ENCODE measurements at regions of chr2 and their contacts with region 1.

Region 1: DNA sequence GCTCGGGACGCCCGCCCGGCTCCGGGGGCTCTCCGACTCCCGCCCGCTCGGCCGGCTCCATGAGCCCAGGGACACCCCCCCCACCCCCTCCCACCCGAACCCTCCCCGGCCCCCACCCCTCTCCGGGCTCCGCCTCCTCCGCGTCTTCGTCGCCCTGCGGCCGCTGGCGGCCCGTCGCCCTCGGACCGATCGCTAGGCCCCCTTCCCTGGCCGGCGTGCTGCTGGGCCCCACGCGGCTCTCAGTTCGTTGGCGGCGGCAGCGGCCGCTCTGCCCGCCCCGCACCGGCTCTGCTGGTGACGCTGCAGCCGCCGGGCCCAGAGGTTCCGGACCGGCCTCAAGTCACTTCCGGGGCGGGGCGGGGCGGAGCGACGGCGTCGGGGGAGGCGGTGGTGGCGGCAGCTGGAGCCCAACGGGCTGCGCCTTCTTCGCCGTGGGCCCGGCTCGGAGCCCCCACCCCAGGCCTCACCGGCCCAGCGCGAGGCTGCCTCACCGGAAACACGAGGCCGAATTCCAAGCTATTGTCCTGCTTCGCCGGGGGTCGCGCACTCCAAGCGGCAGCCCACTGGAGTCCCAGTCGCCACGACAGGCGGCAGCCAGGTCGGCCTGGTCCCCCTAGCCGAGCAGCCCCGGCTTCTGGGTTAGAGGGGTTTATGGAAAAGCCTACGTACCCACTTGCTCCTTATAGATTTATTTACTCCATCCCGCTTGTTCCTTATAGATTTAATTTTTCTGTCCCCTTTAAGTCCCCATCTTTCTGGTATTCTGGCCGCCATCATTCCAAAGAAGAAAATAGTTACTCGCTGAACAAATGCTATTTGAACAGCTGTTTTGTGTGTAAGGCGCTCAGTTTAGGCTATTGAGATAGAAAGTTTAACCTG is at the start of gene PSME4:
- DNase-seq: peak; percentile 90 to 92
- ATAC-seq: peak; percentile 93 to 94
- H3K4me3 ChIP-seq: peak within 1 kb of the TSS; percentile 90
- H3K27ac ChIP-seq: peak within 1 kb of the TSS; percentile 90 to 92
- H3K4me1 ChIP-seq: peaks cover 21% of the 10 kb centered on the region
- CTCF ChIP-seq: no peak
- EP300 ChIP-seq: no peak
- POLR2A ChIP-seq: peak; percentile 89
- RAD21 ChIP-seq: no peak
- polyA plus RNA-seq, gene PSME4: 55.8 and 63.6 TPM in 2 replicates

Region 2: DNA sequence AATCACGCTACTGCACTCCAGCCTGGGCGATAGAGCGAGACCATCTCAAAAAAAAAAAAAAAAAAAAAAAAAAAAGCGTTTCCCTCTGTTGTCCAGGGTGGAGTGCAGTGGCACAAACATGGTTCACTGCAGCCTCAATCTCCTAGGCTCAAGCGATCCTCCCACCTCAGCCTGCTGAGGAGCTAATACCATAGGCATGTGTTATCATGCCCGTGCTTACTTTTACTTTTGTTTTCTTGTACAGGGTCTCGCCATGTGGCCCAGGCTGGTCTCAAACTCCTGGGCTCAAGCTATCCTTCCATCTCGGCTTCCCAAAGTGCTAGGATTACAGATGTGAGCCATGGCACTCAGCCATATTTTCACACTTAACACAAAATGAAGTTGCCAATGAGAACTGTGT is 37.6 kb before region 1 on chr2:
- CTCF ChIA-PET with region 1: no interaction called
- POLR2A ChIA-PET with region 1: no interaction called
- DNase-seq: no peak
- ATAC-seq: no peak
- H3K4me3 ChIP-seq: no peak overlapping the region
- H3K27ac ChIP-seq: no peak overlapping the region
- H3K4me1 ChIP-seq: no peaks in the 10 kb centered on the region
- CTCF ChIP-seq: no peak
- EP300 ChIP-seq: no peak
- POLR2A ChIP-seq: no peak
- RAD21 ChIP-seq: no peak

Region 3: DNA sequence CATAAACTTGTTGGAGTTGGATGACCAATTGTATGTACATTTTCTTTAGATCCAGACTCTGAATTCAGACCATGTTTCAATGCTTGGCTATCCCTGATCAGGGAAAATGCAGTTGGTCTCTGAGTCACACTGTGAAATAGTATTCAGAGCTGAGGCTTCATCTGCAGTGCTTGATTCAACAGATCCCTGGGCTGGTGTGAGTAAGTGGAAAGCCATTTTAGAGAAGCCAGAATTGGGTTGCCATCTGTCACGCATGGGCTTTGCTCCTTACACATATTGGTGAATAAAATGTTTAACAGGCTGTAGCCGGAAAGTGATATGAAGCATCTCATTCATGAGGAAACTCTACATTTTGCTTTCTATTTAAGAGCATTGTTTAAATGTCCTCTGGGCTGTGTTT is 94.4 kb after region 1 on chr2:
- CTCF ChIA-PET with region 1: no interaction called
- POLR2A ChIA-PET with region 1: no interaction called
- DNase-seq: no peak
- ATAC-seq: no peak
- H3K4me3 ChIP-seq: no peak overlapping the region
- H3K27ac ChIP-seq: no peak overlapping the region
- H3K4me1 ChIP-seq: no peaks in the 10 kb centered on the region; the same call in 2 of the 3 replicates
- CTCF ChIP-seq: no peak
- EP300 ChIP-seq: no peak
- POLR2A ChIP-seq: no peak
- RAD21 ChIP-seq: no peak

Region 4: DNA sequence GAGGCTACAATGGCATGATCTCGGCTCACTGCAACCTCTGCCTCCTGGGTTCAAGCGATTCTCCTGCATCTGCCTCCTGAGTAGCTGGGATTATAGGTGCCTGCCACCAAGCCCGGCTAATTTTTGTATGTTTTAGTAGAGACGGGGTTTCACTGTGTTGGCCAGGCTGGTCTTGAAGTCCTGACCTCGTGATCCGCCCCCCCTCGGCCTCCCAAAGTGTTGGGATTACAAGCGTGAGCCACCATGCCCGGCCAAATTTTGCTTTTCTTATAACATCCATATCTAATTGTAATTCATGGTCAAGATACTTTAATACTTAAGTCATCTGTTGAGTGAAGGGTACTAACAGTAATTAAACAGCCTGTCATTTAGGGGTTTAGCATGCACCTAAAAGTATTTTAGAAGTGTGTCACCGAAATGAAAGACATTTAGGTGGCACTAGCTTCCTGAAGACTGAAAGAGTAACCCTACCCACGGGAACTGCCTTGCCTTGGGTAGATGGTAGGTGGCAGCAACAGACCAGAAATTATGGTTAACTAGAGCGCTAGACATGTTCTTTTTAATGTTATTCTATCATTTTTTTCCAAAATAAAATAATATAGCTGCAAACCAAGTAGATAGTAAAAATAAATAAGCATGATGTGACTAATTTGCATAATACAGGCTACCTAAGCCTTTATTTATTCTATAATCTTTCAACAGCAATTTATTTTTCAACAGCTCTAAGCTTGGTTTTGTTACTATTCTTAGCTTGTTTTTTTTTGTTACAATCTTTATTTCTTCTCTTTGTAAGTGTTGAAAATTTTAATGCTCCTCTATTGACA is 135.9 kb after region 1 on chr2:
- CTCF ChIA-PET with region 1: interaction called, 4 read pairs
- POLR2A ChIA-PET with region 1: interaction called, 11 read pairs
- DNase-seq: peak; percentile 51 to 72
- ATAC-seq: peak; percentile 83 to 88
- H3K4me3 ChIP-seq: no peak overlapping the region
- H3K27ac ChIP-seq: peak overlapping the region in 1 of 2 experiments; percentile 22; a peak in 1 of 6 replicates
- H3K4me1 ChIP-seq: peaks cover 19% of the 10 kb centered on the region
- CTCF ChIP-seq: peak; percentile 94
- EP300 ChIP-seq: no peak
- POLR2A ChIP-seq: no peak
- RAD21 ChIP-seq: peak; percentile 92 to 94

Region 5: GRCh38 chr2:55073000-55073983 is 1102.3 kb after region 1 on chr2:
- CTCF ChIA-PET with region 1: no interaction called
- POLR2A ChIA-PET with region 1: no interaction called
- DNase-seq: no peak
- ATAC-seq: no peak
- H3K4me3 ChIP-seq: no peak overlapping the region
- H3K27ac ChIP-seq: no peak overlapping the region
- H3K4me1 ChIP-seq: no peaks in the 10 kb centered on the region
- CTCF ChIP-seq: no peak
- EP300 ChIP-seq: no peak
- POLR2A ChIP-seq: no peak
- RAD21 ChIP-seq: no peak

Measured in A549 (cell line).